ENCODE measurements at regions of chr6 and their contacts with region 1.

Region 1: DNA sequence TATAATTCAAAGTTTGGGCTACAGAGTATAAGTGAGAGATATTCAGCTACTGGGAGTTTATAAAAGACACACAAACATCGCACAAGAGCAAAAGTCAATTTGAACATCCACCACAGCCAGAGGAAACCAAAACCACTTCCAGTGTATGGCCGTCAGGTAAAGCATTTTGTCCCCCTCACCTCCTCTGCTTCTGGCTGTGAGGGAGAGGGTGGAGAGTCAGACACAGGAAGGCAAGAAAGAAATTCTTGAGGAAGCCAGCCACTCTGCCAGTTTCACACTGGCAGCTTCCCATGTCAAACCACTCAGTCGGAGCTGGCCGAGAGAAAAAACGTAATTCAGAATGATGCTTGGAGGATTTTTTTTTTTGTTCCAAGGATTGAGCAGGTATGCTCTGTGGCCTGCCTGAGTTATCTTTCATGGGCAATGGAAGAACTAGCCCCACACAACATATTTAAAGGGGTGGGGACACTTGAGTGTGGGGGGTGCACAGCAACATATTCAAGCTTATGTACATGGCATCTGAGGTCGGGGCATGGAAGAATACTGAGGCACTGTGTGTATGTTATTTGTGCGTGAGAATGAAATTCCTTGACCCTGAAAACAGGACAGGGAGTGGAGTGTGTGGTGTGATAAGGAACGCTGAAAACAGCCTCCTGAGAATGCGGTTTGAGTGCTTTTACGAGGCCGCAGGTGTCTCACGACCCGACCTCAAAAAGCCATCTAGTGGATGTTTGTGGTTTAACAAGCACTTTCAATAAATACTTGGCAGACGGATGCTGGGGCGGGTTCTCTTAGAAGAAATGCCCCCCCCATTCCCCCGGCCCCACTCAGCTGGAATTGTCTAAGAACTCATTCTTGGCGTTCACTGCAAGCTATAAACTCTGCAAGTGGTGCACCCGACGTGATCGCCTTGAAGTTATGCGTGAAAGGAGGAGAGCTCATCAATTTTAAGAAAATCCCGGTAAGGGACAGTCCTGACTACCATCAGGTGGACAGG is 27.5 kb upstream of the ZBTB22 start:
- DNase-seq: peak; percentile 53 to 93 (median 62)
- ATAC-seq: peak; percentile 52
- H3K4me3 ChIP-seq: peak overlapping the region; percentile 24
- H3K4me3 Mint-ChIP-seq: peak overlapping the region; percentile 90
- H3K27ac ChIP-seq: peak overlapping the region; percentile 79 to 88
- H3K27ac Mint-ChIP-seq: peak overlapping the region; percentile 98
- H3K4me1 ChIP-seq: peaks cover 49% of the 10 kb centered on the region
- H3K4me1 Mint-ChIP-seq: peaks cover 38% of the 10 kb centered on the region
- H3K27me3 ChIP-seq: no peaks in the 10 kb centered on the region
- H3K27me3 Mint-ChIP-seq: no peaks in the 10 kb centered on the region
- CTCF ChIP-seq: peak; percentile 64

Region 2: DNA sequence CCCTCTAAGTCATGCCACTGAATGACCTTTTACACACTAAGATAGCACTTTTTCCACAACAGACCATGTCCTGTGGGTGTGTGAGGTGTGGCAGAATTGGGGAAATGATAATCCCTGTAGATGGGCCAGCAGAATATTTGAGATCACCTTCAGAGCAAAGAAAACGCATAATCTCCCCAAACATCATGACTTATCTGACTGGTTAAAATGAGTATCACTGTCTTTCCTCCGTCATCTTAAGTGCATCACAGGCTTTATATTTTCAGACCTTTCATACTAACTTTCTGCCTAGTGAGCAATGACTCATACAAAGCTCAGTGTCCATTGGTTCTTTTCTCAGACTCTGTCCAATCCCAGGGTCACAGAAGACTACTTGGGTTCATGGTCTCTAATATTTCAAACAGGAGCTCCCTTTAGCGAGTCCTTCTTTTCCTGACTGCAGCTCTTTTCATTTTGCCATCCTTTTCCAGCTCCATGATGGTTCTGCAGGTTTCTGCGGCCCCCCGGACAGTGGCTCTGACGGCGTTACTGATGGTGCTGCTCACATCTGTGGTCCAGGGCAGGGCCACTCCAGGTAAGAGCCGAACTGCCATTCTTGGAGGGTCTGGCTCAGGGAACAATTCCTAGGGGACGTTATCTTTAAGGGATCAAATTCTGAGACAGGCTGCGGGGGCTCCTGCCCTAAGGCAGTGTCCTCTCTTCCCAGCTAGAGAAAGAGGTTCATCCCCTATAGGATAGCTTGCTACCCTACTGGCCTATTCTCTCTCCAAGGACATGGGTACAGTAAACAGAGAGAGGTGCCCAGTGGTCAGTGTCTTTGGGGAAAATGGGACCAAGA is 269.2 kb before region 1 on chr6 and contains the start of gene HLA-DPB1:
- CTCF ChIA-PET with region 1: no interaction called
- POLR2A ChIA-PET with region 1: no interaction called
- intact Hi-C with region 1: no loop called
- DNase-seq: peak in 4 of 14 experiments; percentile 23 to 88 (median 86)
- ATAC-seq: peak; percentile 93
- H3K4me3 ChIP-seq: peak within 1 kb of the TSS; percentile 81
- H3K4me3 Mint-ChIP-seq: peak within 1 kb of the TSS; percentile 90
- H3K27ac ChIP-seq: peak within 1 kb of the TSS in 1 of 2 donors; percentile 68
- H3K27ac Mint-ChIP-seq: peak within 1 kb of the TSS; percentile 90
- H3K4me1 ChIP-seq: peaks cover 39% of the 10 kb centered on the region
- H3K4me1 Mint-ChIP-seq: peaks cover 59% of the 10 kb centered on the region
- H3K27me3 ChIP-seq: no peaks in the 10 kb centered on the region
- H3K27me3 Mint-ChIP-seq: peaks cover 12% of the 10 kb centered on the region
- CTCF ChIP-seq: no peak
- total RNA-seq, gene HLA-DPB1: 29.0 to 31.7 TPM

Region 3: DNA sequence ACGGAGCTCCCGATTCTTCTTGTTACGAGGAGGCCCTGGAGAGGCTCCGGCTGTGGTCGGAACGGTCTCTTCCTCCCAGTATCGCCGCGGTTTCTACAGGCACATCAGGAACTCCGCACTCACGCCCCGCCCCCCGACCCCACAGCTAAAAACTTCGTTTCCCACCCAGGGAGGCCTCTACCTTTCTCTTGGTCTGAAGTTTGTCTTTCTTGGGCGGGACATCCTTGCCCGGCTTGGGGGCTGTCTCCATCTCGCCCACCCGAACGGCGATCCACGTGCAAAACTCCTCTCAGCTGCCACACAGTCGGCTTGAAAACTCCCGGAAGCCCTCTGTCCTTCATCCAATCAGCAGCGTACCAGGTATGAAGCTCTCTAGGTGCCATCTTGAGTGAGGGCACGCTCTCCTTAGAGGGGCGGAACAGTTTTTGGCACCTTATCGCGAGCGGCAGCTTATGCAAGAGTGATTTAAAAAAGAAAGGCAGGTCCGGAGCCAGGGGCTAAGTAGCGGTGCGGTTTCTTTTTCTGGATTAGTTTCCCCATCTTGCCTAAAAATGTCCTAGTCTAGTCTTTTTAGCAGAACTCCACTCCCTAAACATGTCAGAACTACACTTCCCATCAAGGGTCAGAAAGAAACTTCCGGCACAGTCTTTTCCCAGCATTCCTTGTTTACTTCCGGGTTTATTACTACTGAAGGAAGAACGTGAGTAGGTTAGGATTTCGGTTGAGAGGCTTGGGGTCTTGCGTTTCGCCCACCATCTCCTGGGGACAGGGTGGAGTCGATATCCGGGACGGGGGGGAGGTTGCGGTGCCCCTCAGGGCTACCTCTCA is 55.9 kb before region 1 on chr6 and contains the starts of genes PFDN6 and WDR46:
- CTCF ChIA-PET with region 1: no interaction called
- POLR2A ChIA-PET with region 1: interaction called, 35 read pairs
- intact Hi-C with region 1: no loop called
- DNase-seq: peak; percentile 62 to 92 (median 76)
- ATAC-seq: peak; percentile 97
- H3K4me3 ChIP-seq: peak within 1 kb of the TSS; percentile 80
- H3K4me3 Mint-ChIP-seq: peak within 1 kb of the TSS; percentile 97
- H3K27ac ChIP-seq: peak within 1 kb of the TSS; percentile 71 to 83
- H3K27ac Mint-ChIP-seq: peak within 1 kb of the TSS; percentile 83
- H3K4me1 ChIP-seq: peaks cover 39% of the 10 kb centered on the region
- H3K4me1 Mint-ChIP-seq: peaks cover 45% of the 10 kb centered on the region
- H3K27me3 ChIP-seq: no peaks in the 10 kb centered on the region
- H3K27me3 Mint-ChIP-seq: no peaks in the 10 kb centered on the region
- CTCF ChIP-seq: no peak
- total RNA-seq, gene PFDN6: 9.7 to 11.7 TPM
- total RNA-seq, gene WDR46: 13.6 to 15.8 TPM

Region 4: GRCh38 chr6:33306356-33306755 is 38.6 kb before region 1 on chr6:
- CTCF ChIA-PET with region 1: interaction called, 32 read pairs
- POLR2A ChIA-PET with region 1: interaction called, 63 read pairs
- intact Hi-C with region 1: loop called in 1 of 2 experiments (anchors 5 kb)
- DNase-seq: no peak
- ATAC-seq: no peak
- H3K4me3 ChIP-seq: no peak overlapping the region
- H3K4me3 Mint-ChIP-seq: peak overlapping the region; percentile 25
- H3K27ac ChIP-seq: peak overlapping the region in 1 of 2 donors; percentile 32
- H3K27ac Mint-ChIP-seq: peak overlapping the region; percentile 31
- H3K4me1 ChIP-seq: peaks cover 47% of the 10 kb centered on the region
- H3K4me1 Mint-ChIP-seq: peaks cover 31% of the 10 kb centered on the region
- H3K27me3 ChIP-seq: no peaks in the 10 kb centered on the region
- H3K27me3 Mint-ChIP-seq: no peaks in the 10 kb centered on the region
- CTCF ChIP-seq: no peak

Region 5: DNA sequence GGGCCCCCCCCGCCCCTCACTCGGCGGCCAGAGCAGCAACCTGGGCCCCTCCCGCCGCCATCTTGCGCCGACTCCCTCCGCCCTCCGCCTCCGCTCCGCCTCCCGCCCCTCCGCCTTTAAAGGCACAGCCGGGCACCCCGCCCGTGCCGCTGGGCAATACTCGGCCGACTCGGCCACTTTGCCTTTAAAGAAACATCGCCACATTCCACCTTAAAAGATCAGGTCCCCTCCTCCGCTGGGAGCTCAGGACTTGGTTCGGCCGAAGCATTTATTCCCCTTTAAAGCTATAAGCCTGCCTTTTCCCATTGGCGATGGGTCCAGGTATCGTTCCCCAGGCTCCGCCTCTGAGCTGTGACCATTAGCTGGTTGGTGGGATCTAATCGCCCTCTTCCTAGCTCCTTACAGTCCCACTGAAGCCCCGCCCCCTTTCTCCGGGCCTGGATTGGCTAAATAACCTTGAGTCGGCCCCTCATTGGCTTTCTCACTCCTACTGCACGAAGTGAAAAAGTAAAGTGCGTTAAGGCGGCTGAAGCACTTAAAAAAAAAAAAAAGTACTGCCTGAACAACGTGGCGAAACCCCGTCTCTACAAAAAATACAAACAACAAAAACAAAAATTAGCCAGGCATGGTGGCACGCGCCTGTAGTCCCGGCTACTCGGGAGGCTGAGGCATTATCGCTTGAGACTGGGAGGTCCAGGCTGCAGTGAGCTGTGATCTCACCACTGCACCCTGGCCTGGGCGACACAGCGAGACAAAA is 27.2 kb before region 1 on chr6 and contains the start of gene ZBTB22:
- CTCF ChIA-PET with region 1: interaction called, 32 read pairs
- POLR2A ChIA-PET with region 1: interaction called, 155 read pairs
- intact Hi-C with region 1: loop called (anchors 1 kb)
- DNase-seq: peak; percentile 90 to 98 (median 95)
- ATAC-seq: peak; percentile 64
- H3K4me3 ChIP-seq: peak within 1 kb of the TSS; percentile 67
- H3K4me3 Mint-ChIP-seq: peak within 1 kb of the TSS; percentile 100
- H3K27ac ChIP-seq: peak within 1 kb of the TSS; percentile 81 to 86
- H3K27ac Mint-ChIP-seq: peak within 1 kb of the TSS; percentile 94
- H3K4me1 ChIP-seq: peaks cover 75% of the 10 kb centered on the region
- H3K4me1 Mint-ChIP-seq: peaks cover 95% of the 10 kb centered on the region
- H3K27me3 ChIP-seq: no peaks in the 10 kb centered on the region
- H3K27me3 Mint-ChIP-seq: no peaks in the 10 kb centered on the region
- CTCF ChIP-seq: no peak
- total RNA-seq, gene ZBTB22: 11.6 to 13.6 TPM

Region 6: GRCh38 chr6:33391278-33391921 is 46.4 kb after region 1 on chr6 and contains the start of gene KIFC1:
- CTCF ChIA-PET with region 1: no interaction called
- POLR2A ChIA-PET with region 1: interaction called, 27 read pairs
- intact Hi-C with region 1: loop called in 1 of 2 experiments (anchors 5 kb)
- DNase-seq: peak; percentile 98 to 100 (median 99)
- ATAC-seq: peak; percentile 86
- H3K4me3 ChIP-seq: peak within 1 kb of the TSS; percentile 65
- H3K4me3 Mint-ChIP-seq: peak within 1 kb of the TSS; percentile 87
- H3K27ac ChIP-seq: peak within 1 kb of the TSS; percentile 69 to 78
- H3K27ac Mint-ChIP-seq: peak within 1 kb of the TSS; percentile 91
- H3K4me1 ChIP-seq: peaks cover 25% of the 10 kb centered on the region
- H3K4me1 Mint-ChIP-seq: peaks cover 23% of the 10 kb centered on the region
- H3K27me3 ChIP-seq: no peaks in the 10 kb centered on the region
- H3K27me3 Mint-ChIP-seq: no peaks in the 10 kb centered on the region
- CTCF ChIP-seq: peak; percentile 99
- total RNA-seq, gene KIFC1: 1.2 to 1.6 TPM

Region 7: GRCh38 chr6:33425668-33426577 is 80.9 kb after region 1 on chr6:
- CTCF ChIA-PET with region 1: interaction called, 7 read pairs
- POLR2A ChIA-PET with region 1: interaction called, 15 read pairs
- intact Hi-C with region 1: no loop called
- DNase-seq: peak; percentile 65 to 91 (median 80)
- ATAC-seq: peak; percentile 48
- H3K4me3 ChIP-seq: peak overlapping the region; percentile 71
- H3K4me3 Mint-ChIP-seq: peak overlapping the region; percentile 94
- H3K27ac ChIP-seq: peak overlapping the region; percentile 86 to 92
- H3K27ac Mint-ChIP-seq: peak overlapping the region; percentile 99
- H3K4me1 ChIP-seq: peaks cover 60% of the 10 kb centered on the region
- H3K4me1 Mint-ChIP-seq: peaks cover 80% of the 10 kb centered on the region
- H3K27me3 ChIP-seq: no peaks in the 10 kb centered on the region
- H3K27me3 Mint-ChIP-seq: no peaks in the 10 kb centered on the region
- CTCF ChIP-seq: peak; percentile 65

Region 8: DNA sequence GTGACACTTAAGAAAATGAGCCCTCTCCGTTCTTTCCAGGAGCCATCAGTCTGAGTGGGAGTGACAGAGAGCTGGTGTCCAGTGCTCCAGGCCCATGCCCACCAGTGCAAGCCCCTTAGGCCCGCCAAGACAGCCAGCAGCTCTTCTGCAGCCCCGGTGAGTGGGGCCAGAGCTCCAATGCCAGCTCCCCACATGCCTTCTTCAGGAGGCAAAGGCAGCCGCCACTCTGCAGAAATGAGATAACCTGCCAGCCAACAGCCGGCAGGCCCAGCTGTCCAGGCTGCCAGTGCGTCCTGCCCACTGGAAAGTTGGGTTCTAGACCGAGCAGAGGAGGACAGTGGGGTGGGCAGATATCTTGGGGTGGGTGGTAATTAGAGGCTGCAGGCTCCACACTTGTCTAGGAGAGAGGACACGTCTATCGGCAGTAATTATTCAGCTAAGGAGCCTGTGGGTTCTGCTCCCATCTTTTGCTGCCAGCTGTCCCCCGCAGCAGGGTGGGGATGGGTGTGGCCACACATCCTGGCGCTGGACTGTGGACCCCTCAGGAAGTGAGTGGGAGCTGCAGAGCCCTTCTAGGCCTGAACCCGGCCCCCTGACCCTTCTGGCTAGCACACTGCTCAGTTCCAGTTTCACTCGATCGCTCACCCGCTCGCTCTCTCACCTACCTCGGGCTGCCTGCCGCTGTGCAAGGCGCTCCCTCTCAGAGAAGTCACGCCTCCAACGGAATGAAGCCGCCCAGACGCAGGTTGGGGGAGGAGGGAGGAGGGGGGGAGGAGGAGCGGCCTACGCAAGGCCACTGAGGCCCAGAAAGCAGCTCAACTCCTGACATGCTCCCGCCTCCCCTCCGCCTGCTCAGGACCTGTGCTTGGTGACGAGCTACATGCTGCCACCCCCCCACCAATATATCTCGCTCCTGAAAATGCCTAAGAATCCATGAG is 797.3 kb after region 1 on chr6:
- CTCF ChIA-PET with region 1: no interaction called
- POLR2A ChIA-PET with region 1: no interaction called
- intact Hi-C with region 1: no loop called
- DNase-seq: no peak
- ATAC-seq: no peak
- H3K4me3 ChIP-seq: no peak overlapping the region
- H3K4me3 Mint-ChIP-seq: no peak overlapping the region
- H3K27ac ChIP-seq: no peak overlapping the region
- H3K27ac Mint-ChIP-seq: no peak overlapping the region
- H3K4me1 ChIP-seq: peaks cover 38% of the 10 kb centered on the region
- H3K4me1 Mint-ChIP-seq: peaks cover 23% of the 10 kb centered on the region
- H3K27me3 ChIP-seq: peaks cover 72 to 77% of the 10 kb centered on the region in 2 experiments
- H3K27me3 Mint-ChIP-seq: peaks cover 81% of the 10 kb centered on the region
- CTCF ChIP-seq: no peak

Measured in CD4-positive, alpha-beta T cell (primary cell).